Activated CD4-positive, alpha-beta T cell treated with anti-CD3 and anti-CD28 coated beads, Interleukin-2, amount 10 ng/mL, durations not matched to agents 24 days and 14 days (primary cell): ENCODE measurements at regions of chr13 and their contacts with region 1.

Region 1: DNA sequence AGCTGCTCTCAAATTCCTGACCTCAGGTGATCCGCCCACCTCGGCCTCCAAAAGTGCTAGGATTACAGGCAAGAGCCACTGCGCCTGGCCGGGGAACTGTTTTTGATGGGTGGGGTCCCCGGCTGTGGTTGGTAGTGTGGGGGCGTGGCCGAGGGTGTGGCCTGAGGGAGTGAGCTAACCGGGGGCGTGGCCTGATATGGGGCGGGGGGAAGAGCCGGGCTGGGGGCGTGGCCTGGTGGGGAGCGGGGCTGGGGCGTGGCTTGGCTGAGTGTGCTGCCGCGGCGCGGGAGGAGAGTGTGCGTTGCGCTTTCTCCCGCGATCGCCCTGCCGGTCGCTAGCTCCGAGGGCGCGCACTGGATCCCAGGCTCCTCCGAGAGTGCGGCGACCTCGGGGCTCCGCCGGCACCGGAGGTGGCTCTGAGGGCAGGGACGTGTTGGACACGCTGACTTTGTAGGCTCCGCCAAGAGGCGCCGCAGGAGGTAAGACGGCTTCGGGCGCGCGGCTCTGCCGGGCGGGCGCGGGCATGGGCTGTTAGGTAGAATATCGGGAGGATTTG is at the start of gene SPATA13:
- DNase-seq: peak; percentile 97
- H3K4me3 Mint-ChIP-seq: peak within 1 kb of the TSS; percentile 95
- H3K27ac Mint-ChIP-seq: peak within 1 kb of the TSS; percentile 90
- H3K4me1 Mint-ChIP-seq: peaks cover 21% of the 10 kb centered on the region
- H3K27me3 Mint-ChIP-seq: peaks cover 27% of the 10 kb centered on the region
- total RNA-seq, gene SPATA13: 41.9 and 43.6 TPM in 2 replicates

Region 2: DNA sequence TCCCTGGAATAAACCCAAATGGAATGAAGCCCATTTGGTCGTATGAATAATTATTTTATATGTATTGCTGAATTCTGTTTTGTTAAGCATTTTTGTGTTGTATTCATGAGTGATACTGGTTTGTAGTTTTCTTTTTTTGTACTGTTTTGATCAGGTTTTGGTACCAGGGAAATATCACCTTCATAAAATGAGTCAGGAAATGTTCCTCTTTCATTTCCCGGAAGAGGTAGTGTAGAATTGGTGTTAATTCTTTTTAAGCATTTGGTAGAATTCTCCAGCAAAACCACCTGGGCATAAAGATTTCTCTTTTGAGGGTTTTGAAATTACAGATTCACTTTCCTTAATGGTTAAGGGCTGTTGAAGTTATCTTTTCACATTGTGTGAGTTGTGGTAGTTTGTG is 13.3 kb after region 1 on chr13:
- intact Hi-C with region 1: no loop called
- DNase-seq: no peak
- H3K4me3 Mint-ChIP-seq: no peak overlapping the region
- H3K27ac Mint-ChIP-seq: peak overlapping the region; percentile 10
- H3K4me1 Mint-ChIP-seq: peaks cover 15% of the 10 kb centered on the region
- H3K27me3 Mint-ChIP-seq: no peaks in the 10 kb centered on the region

Region 3: DNA sequence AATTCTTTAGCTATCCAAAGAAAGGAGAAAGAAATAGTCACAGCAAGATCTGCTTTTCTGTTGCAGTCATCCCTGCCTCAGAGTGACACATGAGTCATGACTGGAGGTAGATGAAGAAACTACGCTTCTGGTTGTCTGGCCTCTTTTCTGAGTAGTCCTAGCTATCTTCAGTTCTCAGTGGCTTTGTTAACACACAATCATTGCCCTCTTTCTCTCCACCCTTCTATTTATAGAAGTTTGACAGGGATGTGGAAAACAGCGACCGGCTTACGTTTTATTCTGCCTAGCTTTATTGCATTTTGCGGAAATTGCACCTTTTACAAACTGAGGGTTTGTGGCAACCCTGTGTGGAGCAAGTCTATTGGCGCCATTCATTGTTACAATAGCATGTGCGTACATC is 26.7 kb after region 1 on chr13:
- intact Hi-C with region 1: loop called (anchors 1 kb)
- DNase-seq: no peak
- H3K4me3 Mint-ChIP-seq: no peak overlapping the region
- H3K27ac Mint-ChIP-seq: peak overlapping the region; percentile 78
- H3K4me1 Mint-ChIP-seq: peaks cover 39% of the 10 kb centered on the region
- H3K27me3 Mint-ChIP-seq: no peaks in the 10 kb centered on the region

Region 4: DNA sequence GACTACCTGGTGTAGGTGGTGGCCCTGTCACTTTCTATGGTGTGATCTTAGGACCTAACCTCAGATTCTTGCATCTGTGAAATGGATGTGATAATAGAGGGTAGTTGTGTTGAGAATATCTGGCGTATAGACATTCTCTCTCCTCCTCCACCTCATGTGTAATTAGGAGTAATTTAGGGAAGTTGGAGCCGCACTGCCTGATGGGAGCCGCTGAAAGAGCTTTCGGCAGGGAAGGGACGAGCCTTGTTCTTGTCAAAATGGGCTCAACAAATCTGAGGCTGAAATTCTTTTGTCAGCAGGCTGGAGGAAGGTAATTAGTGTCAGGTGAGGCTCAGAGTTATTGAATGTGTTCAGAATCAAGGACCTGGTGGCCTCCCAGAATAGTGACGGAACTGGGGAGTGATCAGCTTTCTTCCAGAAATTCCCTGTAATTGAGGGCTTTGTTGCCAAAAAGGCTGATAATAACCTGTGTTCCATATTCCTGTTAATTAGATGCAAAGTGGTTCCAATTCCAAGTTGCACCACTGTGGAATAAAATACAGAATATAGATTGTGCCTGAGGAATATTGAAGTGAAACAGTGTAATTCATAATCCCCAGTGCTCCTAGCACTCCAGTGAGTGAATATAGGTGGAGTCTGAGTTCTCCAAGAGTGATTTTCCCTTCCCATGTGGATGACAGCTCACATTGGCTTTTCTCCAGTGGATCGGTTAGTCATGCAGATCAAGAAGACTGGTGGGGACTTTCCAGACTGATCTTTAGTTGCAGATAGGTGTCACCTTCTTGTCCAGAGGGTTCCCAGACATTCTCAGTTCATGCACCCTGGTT is 47.5 kb after region 1 on chr13:
- intact Hi-C with region 1: loop called (anchors 5 kb)
- DNase-seq: no peak
- H3K4me3 Mint-ChIP-seq: no peak overlapping the region
- H3K27ac Mint-ChIP-seq: no peak overlapping the region
- H3K4me1 Mint-ChIP-seq: peaks cover 31% of the 10 kb centered on the region
- H3K27me3 Mint-ChIP-seq: peaks cover 15% of the 10 kb centered on the region

Region 5: DNA sequence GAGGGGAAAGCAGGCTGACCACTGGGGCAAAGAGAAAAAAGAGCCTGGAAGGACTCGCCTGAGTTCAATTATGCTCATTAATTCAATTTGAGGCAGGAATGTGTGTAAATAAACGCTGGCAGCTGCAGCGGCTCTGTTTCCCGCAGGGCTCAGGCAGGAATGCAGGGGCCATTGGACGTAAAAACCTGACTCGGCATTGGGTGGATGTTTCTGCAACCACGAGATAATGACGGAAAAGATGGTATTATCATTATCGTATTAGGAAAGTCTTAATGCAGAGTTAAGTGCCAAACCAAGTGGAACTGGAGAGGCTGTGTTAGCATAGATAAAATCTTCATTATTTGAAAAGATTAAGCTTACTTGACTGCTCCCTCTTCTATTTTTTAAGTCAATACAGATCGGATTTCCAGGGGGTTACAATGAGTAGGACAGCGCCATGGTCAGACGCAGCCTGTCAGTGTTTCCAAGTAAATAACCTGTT is 1721.5 kb after region 1 on chr13:
- intact Hi-C with region 1: no loop called
- DNase-seq: no peak
- H3K4me3 Mint-ChIP-seq: no peak overlapping the region
- H3K27ac Mint-ChIP-seq: no peak overlapping the region
- H3K4me1 Mint-ChIP-seq: peaks cover 46% of the 10 kb centered on the region
- H3K27me3 Mint-ChIP-seq: no peaks in the 10 kb centered on the region